ENCODE measurements at regions of chr11 and their contacts with region 1.

Region 1: GRCh38 chr11:11332141-11332710 is 20.8 kb downstream of the CSNK2A3 start:
- DNase-seq: no peak
- ATAC-seq: no peak
- H3K4me3 ChIP-seq: no peak overlapping the region
- H3K27ac ChIP-seq: no peak overlapping the region
- H3K4me1 ChIP-seq: peaks cover 0 to 7% (median 0%) of the 10 kb centered on the region in 9 donors
- H3K27me3 ChIP-seq: no peaks in the 10 kb centered on the region
- CTCF ChIP-seq: no peak

Region 2: GRCh38 chr11:11117730-11118129 is 214.5 kb before region 1 on chr11:
- intact Hi-C with region 1: no loop called
- DNase-seq: no peak
- ATAC-seq: no peak
- H3K4me3 ChIP-seq: no peak overlapping the region
- H3K27ac ChIP-seq: no peak overlapping the region
- H3K4me1 ChIP-seq: no peaks in the 10 kb centered on the region
- H3K27me3 ChIP-seq: no peaks in the 10 kb centered on the region
- CTCF ChIP-seq: no peak

Region 3: GRCh38 chr11:11291041-11292015 is 40.9 kb before region 1 on chr11:
- intact Hi-C with region 1: loop called in 1 of 10 experiments (anchors 5 kb)
- DNase-seq: no peak
- ATAC-seq: peak in 1 of 8 donors; percentile 15
- H3K4me3 ChIP-seq: no peak overlapping the region
- H3K27ac ChIP-seq: no peak overlapping the region
- H3K4me1 ChIP-seq: peaks cover 0 to 4% (median 0%) of the 10 kb centered on the region in 9 donors
- H3K27me3 ChIP-seq: no peaks in the 10 kb centered on the region
- CTCF ChIP-seq: no peak

Measured in heart right ventricle (tissue), 16 donors.